WTC11 (cell line): ENCODE measurements at regions of chr11 and their contacts with region 1.

Region 1: GRCh38 chr11:120172054-120172911 is 34.4 kb upstream of the TRIM29 start:
- DNase-seq: peak; percentile 82
- ATAC-seq: peak; percentile 50
- H3K4me3 Mint-ChIP-seq: no peak overlapping the region
- H3K27ac Mint-ChIP-seq: no peak overlapping the region
- H3K4me1 Mint-ChIP-seq: peaks cover 9% of the 10 kb centered on the region; the same call in 1 of the 2 replicates
- H3K27me3 Mint-ChIP-seq: peaks cover 89% of the 10 kb centered on the region
- CTCF ChIP-seq: peak; percentile 27; the same call in 1 of the 2 replicates

Region 2: GRCh38 chr11:119878990-119879389 is 293.3 kb before region 1 on chr11:
- CTCF ChIA-PET with region 1: no interaction called
- POLR2A ChIA-PET with region 1: no interaction called
- DNase-seq: no peak
- ATAC-seq: no peak
- H3K4me3 Mint-ChIP-seq: no peak overlapping the region
- H3K27ac Mint-ChIP-seq: no peak overlapping the region
- H3K4me1 Mint-ChIP-seq: peaks cover 16% of the 10 kb centered on the region
- H3K27me3 Mint-ChIP-seq: peaks cover 3% of the 10 kb centered on the region; the same call in 1 of the 2 replicates
- CTCF ChIP-seq: no peak

Region 3: DNA sequence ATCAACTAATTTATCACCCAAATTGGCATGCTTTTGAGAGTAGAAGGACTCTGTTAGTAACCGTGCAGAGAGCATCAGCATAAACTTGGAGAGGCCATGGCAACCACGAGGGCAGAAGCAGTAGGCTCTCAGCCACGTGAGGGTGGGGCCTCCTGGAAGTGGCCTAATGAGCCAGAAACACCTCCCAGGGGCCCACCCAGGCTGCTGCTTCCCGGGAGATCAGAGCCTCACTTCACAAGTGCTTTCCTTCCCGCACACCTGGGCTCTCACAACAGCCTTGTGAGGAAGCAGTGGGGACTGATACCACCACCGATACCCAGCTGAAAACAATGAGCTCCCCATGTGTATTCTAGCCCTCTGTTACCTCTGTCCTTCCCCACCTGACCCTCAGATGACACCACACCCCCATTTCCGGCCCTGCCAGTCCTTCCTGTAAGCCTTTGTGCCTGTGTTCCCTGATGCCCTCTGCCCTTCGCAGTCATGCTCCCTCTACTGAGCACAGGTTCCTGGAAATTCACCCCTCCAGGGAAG is 51.4 kb before region 1 on chr11:
- CTCF ChIA-PET with region 1: interaction called, 11 read pairs
- POLR2A ChIA-PET with region 1: no interaction called
- DNase-seq: no peak
- ATAC-seq: no peak
- H3K4me3 Mint-ChIP-seq: no peak overlapping the region
- H3K27ac Mint-ChIP-seq: no peak overlapping the region
- H3K4me1 Mint-ChIP-seq: peaks cover 12% of the 10 kb centered on the region
- H3K27me3 Mint-ChIP-seq: no peaks in the 10 kb centered on the region
- CTCF ChIP-seq: no peak

Region 4: GRCh38 chr11:120182790-120183491 is 10.7 kb after region 1 on chr11:
- CTCF ChIA-PET with region 1: interaction called, 50 read pairs
- POLR2A ChIA-PET with region 1: no interaction called
- DNase-seq: peak; percentile 77
- ATAC-seq: peak; percentile 82
- H3K4me3 Mint-ChIP-seq: no peak overlapping the region
- H3K27ac Mint-ChIP-seq: no peak overlapping the region
- H3K4me1 Mint-ChIP-seq: peaks cover 30% of the 10 kb centered on the region
- H3K27me3 Mint-ChIP-seq: peaks cover 65% of the 10 kb centered on the region
- CTCF ChIP-seq: no peak

Region 5: GRCh38 chr11:120210626-120211521 is 38.6 kb after region 1 on chr11 and contains the start of gene OAF:
- CTCF ChIA-PET with region 1: interaction called, 15 read pairs
- POLR2A ChIA-PET with region 1: no interaction called
- DNase-seq: peak; percentile 87
- ATAC-seq: peak; percentile 85
- H3K4me3 Mint-ChIP-seq: peak within 1 kb of the TSS; percentile 79
- H3K27ac Mint-ChIP-seq: no peak within 1 kb of the TSS
- H3K4me1 Mint-ChIP-seq: peaks cover 26% of the 10 kb centered on the region
- H3K27me3 Mint-ChIP-seq: peaks cover 94% of the 10 kb centered on the region
- CTCF ChIP-seq: no peak
- total RNA-seq, gene OAF: 3.2 to 5.6 TPM (median 4.2 TPM) in 3 replicates

Region 6: GRCh38 chr11:120235024-120235861 is 63.0 kb after region 1 on chr11:
- CTCF ChIA-PET with region 1: interaction called, 94 read pairs
- POLR2A ChIA-PET with region 1: interaction called, 3 read pairs
- DNase-seq: peak; percentile 91
- ATAC-seq: peak; percentile 67
- H3K4me3 Mint-ChIP-seq: no peak overlapping the region
- H3K27ac Mint-ChIP-seq: no peak overlapping the region
- H3K4me1 Mint-ChIP-seq: peaks cover 25% of the 10 kb centered on the region
- H3K27me3 Mint-ChIP-seq: peaks cover 31% of the 10 kb centered on the region
- CTCF ChIP-seq: peak; percentile 89

Region 7: GRCh38 chr11:120281143-120281795 is 109.0 kb after region 1 on chr11:
- CTCF ChIA-PET with region 1: no interaction called
- POLR2A ChIA-PET with region 1: no interaction called
- DNase-seq: no peak
- ATAC-seq: no peak; the same call in 1 of the 2 replicates
- H3K4me3 Mint-ChIP-seq: no peak overlapping the region
- H3K27ac Mint-ChIP-seq: no peak overlapping the region
- H3K4me1 Mint-ChIP-seq: peaks cover 12% of the 10 kb centered on the region
- H3K27me3 Mint-ChIP-seq: no peaks in the 10 kb centered on the region
- CTCF ChIP-seq: no peak